Sigmoid colon (tissue), 7 donors: ENCODE measurements at regions of chr18 and their contacts with region 1.

Region 1: DNA sequence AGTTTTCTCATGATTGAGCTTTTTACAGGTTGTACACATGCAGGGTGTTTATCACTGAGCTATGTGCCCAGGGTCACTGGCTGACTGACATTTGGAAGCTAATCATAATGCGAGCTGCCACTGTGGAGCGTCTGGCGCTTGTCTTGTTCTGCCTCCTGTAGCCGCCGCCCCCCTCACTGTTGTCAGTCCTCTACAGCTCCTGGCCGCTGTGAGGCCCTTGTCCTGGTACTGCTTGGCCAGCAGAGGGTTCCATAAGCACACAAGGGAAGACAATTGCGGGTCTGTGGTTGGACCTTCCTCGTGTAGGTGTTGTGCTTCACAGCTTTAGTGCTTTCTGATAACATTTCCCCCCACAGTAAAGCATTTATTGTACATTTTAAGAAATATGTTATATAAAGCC is 105.6 kb upstream of the LDLRAD4 start:
- DNase-seq: peak; percentile 81
- H3K4me3 ChIP-seq: no peak overlapping the region
- H3K27ac ChIP-seq: peak overlapping the region in 2 of 4 donors; percentile 35 to 43
- H3K4me1 ChIP-seq: peaks cover 0 to 9% (median 2%) of the 10 kb centered on the region in 4 donors
- H3K27me3 ChIP-seq: no peaks in the 10 kb centered on the region
- CTCF ChIP-seq: peak; percentile 42 to 71 (median 56)
- EP300 ChIP-seq: no peak
- POLR2A ChIP-seq: no peak

Region 2: DNA sequence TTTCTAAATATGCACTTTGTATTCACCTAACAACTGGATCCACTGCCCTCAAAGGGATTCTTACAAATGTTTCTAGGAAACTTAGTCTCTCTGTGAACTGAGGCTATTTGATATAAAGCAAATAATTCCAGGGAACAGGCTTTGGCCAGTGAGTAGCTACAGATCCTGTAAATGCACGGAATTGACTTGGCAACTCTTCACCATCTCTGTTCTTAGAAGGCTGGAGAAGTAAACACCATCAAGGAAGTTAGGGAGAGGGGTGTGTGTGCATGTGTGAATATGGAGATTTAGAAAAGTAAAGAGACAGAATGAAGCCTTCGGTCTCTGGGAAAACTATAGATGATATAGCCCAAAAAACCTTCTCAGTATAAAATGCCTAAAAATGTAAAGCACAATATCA is 848.1 kb before region 1 on chr18:
- intact Hi-C with region 1: loop called (anchors 5 kb)
- DNase-seq: no peak
- H3K4me3 ChIP-seq: no peak overlapping the region
- H3K27ac ChIP-seq: no peak overlapping the region
- H3K4me1 ChIP-seq: no peaks in the 10 kb centered on the region
- H3K27me3 ChIP-seq: no peaks in the 10 kb centered on the region
- CTCF ChIP-seq: no peak
- EP300 ChIP-seq: no peak
- POLR2A ChIP-seq: no peak

Region 3: GRCh38 chr18:13161276-13161899 is 48.4 kb after region 1 on chr18:
- intact Hi-C with region 1: loop called (anchors 2 kb)
- DNase-seq: no peak
- H3K4me3 ChIP-seq: no peak overlapping the region
- H3K27ac ChIP-seq: no peak overlapping the region
- H3K4me1 ChIP-seq: no peaks in the 10 kb centered on the region
- H3K27me3 ChIP-seq: no peaks in the 10 kb centered on the region
- CTCF ChIP-seq: no peak
- EP300 ChIP-seq: no peak
- POLR2A ChIP-seq: no peak

Region 4: DNA sequence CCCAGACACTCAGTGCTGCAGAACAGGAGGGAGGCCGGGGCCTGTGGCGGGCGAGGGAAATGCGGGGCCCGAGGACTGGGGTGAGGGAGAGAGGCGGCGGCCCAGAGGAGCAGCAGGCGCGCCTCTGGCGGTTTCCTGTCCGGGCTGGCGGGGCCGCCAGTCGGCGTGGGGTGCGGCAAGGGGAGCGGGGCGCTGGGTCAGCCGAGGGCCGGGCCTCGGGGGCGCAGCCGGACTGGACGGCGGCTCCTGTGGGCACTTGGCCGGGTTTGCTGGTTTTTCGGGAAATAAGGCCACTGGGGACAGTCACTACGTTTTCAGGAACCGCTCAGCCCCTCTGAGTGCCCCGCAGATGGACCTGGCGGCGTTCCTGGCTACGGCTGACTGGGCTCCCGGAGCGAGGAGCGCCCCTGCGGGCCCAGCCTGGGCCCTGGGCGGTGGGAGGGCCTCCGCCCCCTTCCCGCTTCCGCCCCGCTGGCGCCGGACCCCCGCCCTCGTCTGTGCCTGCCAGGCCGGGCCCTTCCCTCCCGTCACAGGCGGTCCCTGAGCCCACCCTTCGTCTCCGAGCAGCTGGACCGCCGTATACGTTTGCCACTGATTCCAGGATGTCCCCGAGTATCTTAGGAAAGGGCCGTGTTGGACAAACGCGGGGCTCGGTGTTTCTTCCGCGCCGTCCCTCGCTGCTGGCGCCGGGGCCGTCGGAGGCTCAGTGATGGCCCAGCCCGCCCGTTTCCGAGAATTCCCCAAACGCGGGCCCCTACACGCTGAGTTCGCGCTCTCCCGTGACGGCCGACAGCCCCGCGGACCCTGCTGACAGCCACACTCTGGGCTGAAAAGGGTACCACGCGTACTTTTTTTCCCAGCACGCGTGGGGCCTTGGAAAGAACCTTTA is 528.8 kb after region 1 on chr18:
- intact Hi-C with region 1: loop called (anchors 5 kb)
- DNase-seq: peak; percentile 69
- H3K4me3 ChIP-seq: peak overlapping the region; percentile 12 to 49 (median 42)
- H3K27ac ChIP-seq: peak overlapping the region; percentile 36 to 60 (median 52)
- H3K4me1 ChIP-seq: peaks cover 0 to 20% (median 10%) of the 10 kb centered on the region in 4 donors
- H3K27me3 ChIP-seq: no peaks in the 10 kb centered on the region
- CTCF ChIP-seq: no peak
- EP300 ChIP-seq: no peak
- POLR2A ChIP-seq: no peak